Activated T-helper 1 cell treated with anti-CD3 and anti-CD28 coated beads, Interleukin-12 subunit alpha, Interleukin-12 subunit beta, Interleukin-2, Interleukin-4 antibody, amounts not matched to agents 30 ng/mL and 10 ng/mL and 1 ng/mL, durations not matched to agents 14 hours and 24 hours and 36 hours (primary cell): ENCODE measurements at regions of chr6 and their contacts with region 1.

Region 1: DNA sequence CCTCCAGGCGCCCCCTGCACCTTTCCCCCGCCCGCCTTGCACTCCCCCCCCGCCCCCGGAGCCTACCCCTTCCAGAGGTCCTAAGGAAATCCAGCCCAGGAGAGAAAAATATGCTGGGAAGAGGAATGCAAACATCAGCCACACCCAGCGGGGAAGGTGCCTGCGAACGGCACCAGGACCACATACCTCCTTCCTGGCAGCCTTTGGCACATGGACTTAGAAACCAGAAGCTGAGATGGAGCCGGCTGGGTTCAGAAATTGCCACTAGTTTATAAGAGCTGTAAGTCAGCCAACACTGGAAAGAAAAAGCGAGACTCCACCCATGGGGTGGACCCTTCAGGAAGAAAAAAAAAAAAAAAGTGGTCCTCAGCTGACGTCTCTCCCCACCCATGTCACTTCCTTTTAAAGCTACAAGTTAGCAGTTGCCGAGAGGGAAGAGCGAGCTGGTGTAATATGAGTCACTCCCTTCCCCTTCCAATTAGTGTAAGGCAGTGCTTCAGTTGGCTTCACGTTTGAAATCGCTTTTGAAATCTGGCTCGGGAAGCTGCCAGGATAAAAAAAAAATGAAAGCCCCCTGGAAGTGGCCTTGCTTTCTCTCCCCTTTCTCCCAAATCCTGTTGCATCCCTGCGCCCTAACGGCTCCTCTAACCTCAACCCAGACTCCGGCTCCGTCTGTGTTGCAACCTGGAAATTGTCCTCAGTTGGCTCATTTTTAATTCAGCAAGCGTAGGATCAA is at the start of gene AGPAT4:
- DNase-seq: peak; percentile 73
- H3K4me3 Mint-ChIP-seq: peak within 1 kb of the TSS; percentile 91
- H3K27ac Mint-ChIP-seq: peak within 1 kb of the TSS; percentile 97
- H3K4me1 Mint-ChIP-seq: peaks cover 41% of the 10 kb centered on the region
- H3K27me3 Mint-ChIP-seq: peaks cover 9% of the 10 kb centered on the region
- total RNA-seq, gene AGPAT4: 7.8 and 8.6 TPM in 2 replicates

Region 2: DNA sequence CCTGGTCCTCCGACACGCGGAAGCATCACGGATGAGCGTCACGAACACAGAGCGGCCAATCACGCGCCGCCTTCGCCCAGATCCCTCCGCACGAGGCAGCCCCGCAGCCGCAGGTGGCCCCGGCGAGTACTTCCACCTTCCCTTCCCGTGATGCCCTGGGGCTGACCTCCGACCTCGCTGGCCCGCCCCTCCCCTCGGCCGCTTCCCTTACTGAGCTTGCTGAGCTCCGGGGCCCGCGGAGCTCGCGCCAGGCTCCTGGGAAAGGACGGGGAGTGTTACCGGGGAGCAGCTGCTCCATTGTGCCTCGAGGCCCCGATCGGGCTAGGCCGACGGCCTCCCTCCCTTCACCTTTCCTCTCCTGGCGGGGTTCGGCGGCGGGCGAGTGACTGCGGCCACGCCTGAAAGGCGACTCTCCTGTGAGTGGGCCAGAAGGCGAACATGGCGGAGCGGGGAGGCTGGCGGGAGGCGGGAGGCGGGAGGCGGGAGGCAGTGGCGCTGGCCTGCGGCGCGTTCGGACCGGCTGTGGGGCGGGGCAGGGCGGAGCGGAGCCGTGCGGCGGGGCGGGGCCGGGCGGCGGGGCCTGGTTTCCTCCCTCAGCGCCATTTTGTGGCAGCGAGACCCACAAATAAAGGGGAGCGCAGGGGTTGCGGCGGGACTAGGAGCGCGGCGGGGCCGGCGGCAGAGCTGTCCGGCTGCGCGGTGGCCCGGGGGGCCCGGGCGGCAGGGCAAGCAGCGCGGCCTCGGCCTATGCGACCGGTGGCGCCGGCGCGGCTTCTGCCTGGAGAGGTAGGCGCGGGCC is 1546.8 kb before region 1 on chr6 and contains the start of gene WTAP:
- intact Hi-C with region 1: loop called (anchors 2 kb)
- DNase-seq: peak; percentile 95
- H3K4me3 Mint-ChIP-seq: peak within 1 kb of the TSS; percentile 93
- H3K27ac Mint-ChIP-seq: peak within 1 kb of the TSS; percentile 96
- H3K4me1 Mint-ChIP-seq: peaks cover 41% of the 10 kb centered on the region
- H3K27me3 Mint-ChIP-seq: no peaks in the 10 kb centered on the region
- total RNA-seq, gene WTAP: 125 and 136 TPM in 2 replicates

Region 3: GRCh38 chr6:161111261-161111660 is 162.7 kb before region 1 on chr6:
- intact Hi-C with region 1: loop called (anchors 5 kb)
- DNase-seq: peak; percentile 21
- H3K4me3 Mint-ChIP-seq: peak overlapping the region; percentile 4
- H3K27ac Mint-ChIP-seq: peak overlapping the region; percentile 69
- H3K4me1 Mint-ChIP-seq: peaks cover 23% of the 10 kb centered on the region
- H3K27me3 Mint-ChIP-seq: no peaks in the 10 kb centered on the region

Region 4: DNA sequence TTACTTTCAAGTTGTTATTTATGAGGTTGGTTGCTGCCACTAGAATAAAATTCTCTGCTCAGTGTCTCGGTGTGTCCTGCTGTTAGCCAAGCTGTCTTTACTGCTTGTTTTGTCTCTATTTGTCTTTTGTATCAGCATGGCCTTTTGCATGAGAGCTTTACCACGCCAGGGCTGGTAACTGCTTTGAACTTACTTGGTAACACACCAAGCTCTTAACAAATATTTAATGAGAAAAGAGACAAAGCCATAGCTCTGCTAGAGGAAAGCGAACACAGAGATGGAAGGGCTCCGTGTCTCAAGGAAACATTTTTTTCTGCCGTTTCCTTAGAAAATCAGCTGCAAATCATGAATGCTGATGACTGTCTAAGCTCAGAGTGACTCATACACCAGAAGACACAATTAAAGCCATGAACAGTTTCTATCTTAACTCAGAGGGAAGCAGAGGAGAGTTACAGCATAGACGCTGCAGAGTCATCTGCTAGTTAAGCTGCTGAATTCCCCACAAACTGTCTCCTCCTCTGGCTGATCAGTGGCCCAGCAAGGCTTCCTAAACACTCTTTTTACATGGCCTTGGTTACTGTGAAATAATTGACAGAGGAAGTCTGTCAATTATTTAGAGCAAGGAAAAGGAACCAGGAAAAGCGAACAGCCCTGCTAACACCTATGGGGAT is 44.9 kb before region 1 on chr6:
- intact Hi-C with region 1: loop called (anchors 1 kb)
- DNase-seq: no peak
- H3K4me3 Mint-ChIP-seq: peak overlapping the region; percentile 75
- H3K27ac Mint-ChIP-seq: peak overlapping the region; percentile 93
- H3K4me1 Mint-ChIP-seq: peaks cover 61% of the 10 kb centered on the region
- H3K27me3 Mint-ChIP-seq: no peaks in the 10 kb centered on the region

Region 5: DNA sequence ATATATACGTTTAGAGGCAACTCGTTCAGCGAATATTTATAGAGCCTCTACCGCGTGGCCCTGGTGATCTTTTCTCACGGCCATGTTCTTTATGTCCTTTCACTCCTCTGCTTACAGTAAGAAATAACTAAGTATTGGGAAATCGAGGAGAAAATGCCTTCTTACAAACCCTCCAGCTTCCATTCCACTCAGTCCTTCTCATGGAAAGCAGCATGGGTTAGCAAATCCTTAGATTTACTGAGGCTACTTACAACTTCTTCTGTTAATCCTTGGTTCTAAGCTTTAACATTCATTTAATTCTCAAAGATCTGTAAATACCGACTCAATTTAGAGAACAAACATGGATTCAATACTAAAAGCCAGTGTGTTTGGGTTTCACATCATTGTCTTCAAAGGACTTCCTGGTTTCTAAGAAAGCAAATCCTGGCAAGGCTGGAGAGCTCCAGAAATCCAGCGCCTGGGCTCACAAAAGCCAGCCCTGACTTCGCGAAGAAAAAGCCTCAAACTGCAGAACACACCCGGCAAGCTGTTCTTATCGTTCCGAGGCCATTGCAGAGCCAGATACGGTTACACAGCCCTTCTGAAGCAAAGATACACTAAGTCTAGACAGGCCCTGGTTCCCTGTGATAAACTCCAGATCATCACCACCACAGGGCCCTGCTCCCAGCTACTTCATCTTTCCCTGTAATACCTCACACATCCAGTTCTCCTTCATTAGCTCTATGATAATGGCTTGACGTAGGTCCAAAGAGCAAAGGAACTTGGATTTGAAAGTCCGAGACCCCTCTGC is 19.3 kb before region 1 on chr6:
- intact Hi-C with region 1: loop called (anchors 2 kb)
- DNase-seq: no peak
- H3K4me3 Mint-ChIP-seq: no peak overlapping the region
- H3K27ac Mint-ChIP-seq: no peak overlapping the region
- H3K4me1 Mint-ChIP-seq: no peaks in the 10 kb centered on the region
- H3K27me3 Mint-ChIP-seq: no peaks in the 10 kb centered on the region

Region 6: GRCh38 chr6:161439093-161439492 is 165.2 kb after region 1 on chr6:
- intact Hi-C with region 1: no loop called
- DNase-seq: no peak
- H3K4me3 Mint-ChIP-seq: no peak overlapping the region
- H3K27ac Mint-ChIP-seq: no peak overlapping the region
- H3K4me1 Mint-ChIP-seq: no peaks in the 10 kb centered on the region
- H3K27me3 Mint-ChIP-seq: no peaks in the 10 kb centered on the region

Region 7: GRCh38 chr6:161829291-161829729 is 555.4 kb after region 1 on chr6:
- intact Hi-C with region 1: no loop called
- DNase-seq: no peak
- H3K4me3 Mint-ChIP-seq: no peak overlapping the region
- H3K27ac Mint-ChIP-seq: no peak overlapping the region
- H3K4me1 Mint-ChIP-seq: no peaks in the 10 kb centered on the region
- H3K27me3 Mint-ChIP-seq: no peaks in the 10 kb centered on the region